ENCODE measurements at regions of chr2 and their contacts with region 1.

Region 1: GRCh38 chr2:223797811-223798721 is 39.3 kb downstream of the AP1S3 start:
- DNase-seq: peak; percentile 56
- H3K4me3 ChIP-seq: no peak overlapping the region
- H3K27ac ChIP-seq: peak overlapping the region; percentile 95
- H3K4me1 ChIP-seq: peaks cover 44% of the 10 kb centered on the region
- H3K27me3 ChIP-seq: no peaks in the 10 kb centered on the region
- CTCF ChIP-seq: peak; percentile 64

Region 2: DNA sequence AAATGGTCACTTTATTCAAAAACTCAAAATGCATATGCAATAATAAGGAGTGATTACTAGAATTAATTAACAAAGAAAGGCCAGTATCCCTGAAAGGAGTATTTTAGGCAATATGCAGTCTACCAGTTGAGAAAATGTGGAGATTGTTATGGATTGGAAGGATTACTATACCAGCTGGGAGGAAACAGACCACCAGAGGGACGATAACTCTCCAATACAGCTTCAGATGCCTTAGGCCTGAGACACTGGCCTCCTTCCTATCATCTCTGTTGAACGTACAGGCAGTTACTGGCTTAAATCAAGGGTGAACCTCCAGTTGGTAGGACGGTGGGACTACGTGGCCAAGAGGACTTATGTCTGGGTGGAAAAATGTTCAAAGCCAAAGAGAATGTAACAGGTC is 1889.5 kb before region 1 on chr2:
- CTCF ChIA-PET with region 1: no interaction called
- dilution Hi-C with region 1: no loop called
- in situ Hi-C with region 1: no loop called
- intact Hi-C with region 1: no loop called
- DNase-seq: no peak
- H3K4me3 ChIP-seq: no peak overlapping the region
- H3K27ac ChIP-seq: no peak overlapping the region
- H3K4me1 ChIP-seq: no peaks in the 10 kb centered on the region
- H3K27me3 ChIP-seq: peaks cover 3% of the 10 kb centered on the region
- CTCF ChIP-seq: no peak

Region 3: DNA sequence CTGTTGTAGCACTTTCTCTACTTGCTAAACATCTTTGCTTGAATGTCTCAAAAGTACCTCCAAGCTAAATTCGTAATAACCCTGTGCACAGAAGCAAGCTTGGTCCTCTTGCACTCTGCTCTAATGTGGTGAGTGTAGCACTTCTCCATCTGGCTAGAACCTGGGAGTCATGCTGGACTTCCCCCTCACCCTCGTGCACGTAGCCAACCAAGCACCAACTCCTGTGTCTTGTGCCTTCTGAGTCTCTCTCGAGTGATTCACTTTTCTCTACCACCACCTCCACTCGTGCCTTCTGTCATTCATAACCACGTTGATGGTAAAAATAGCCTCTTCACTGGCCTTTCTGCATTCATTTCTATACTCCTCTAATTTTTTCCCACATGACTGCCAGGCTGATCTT is 837.9 kb before region 1 on chr2:
- CTCF ChIA-PET with region 1: no interaction called
- dilution Hi-C with region 1: no loop called
- in situ Hi-C with region 1: no loop called
- intact Hi-C with region 1: no loop called
- DNase-seq: peak; percentile 67
- H3K4me3 ChIP-seq: no peak overlapping the region
- H3K27ac ChIP-seq: no peak overlapping the region
- H3K4me1 ChIP-seq: peaks cover 22% of the 10 kb centered on the region
- H3K27me3 ChIP-seq: no peaks in the 10 kb centered on the region
- CTCF ChIP-seq: no peak

Region 4: GRCh38 chr2:222976521-222977076 is 821.5 kb before region 1 on chr2:
- CTCF ChIA-PET with region 1: interaction called, 6 read pairs
- dilution Hi-C with region 1: no loop called
- in situ Hi-C with region 1: loop called in 1 of 2 experiments (anchors 10 kb)
- intact Hi-C with region 1: loop called (anchors 1 kb)
- DNase-seq: no peak
- H3K4me3 ChIP-seq: no peak overlapping the region
- H3K27ac ChIP-seq: no peak overlapping the region
- H3K4me1 ChIP-seq: peaks cover 15% of the 10 kb centered on the region
- H3K27me3 ChIP-seq: no peaks in the 10 kb centered on the region
- CTCF ChIP-seq: no peak

Region 5: DNA sequence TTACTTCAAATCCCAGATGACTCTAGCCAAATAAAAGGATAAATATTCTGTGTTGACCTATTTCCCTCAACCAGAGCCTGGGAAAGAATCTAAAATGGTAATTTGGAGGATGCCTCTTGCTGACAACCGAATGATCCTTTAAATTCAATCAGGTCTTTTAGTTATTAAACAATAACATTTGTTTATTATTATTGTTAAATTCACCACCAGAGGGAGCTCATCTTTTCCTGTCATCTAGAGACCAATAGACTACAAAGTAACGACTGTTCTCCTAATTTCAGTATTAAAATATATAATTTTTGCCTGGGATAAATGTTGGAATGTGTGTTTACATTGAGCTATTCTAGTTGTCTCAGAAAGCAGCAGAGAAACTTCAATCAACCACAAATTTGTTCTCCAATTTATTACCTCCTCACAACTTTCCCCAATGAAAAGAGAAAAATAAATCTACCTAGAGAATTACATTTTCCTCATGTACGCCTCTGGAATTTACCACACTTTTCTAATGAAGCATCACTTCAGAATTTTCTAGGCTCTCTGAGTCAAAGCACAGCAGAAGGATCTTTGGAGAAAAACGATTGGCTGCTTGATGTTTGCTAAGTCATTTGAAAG is 338.6 kb before region 1 on chr2:
- CTCF ChIA-PET with region 1: no interaction called
- dilution Hi-C with region 1: no loop called
- in situ Hi-C with region 1: no loop called
- intact Hi-C with region 1: loop called (anchors 1 kb)
- DNase-seq: peak; percentile 12
- H3K4me3 ChIP-seq: no peak overlapping the region
- H3K27ac ChIP-seq: peak overlapping the region; percentile 1
- H3K4me1 ChIP-seq: peaks cover 17% of the 10 kb centered on the region
- H3K27me3 ChIP-seq: no peaks in the 10 kb centered on the region
- CTCF ChIP-seq: peak; percentile 29 to 43

Region 6: DNA sequence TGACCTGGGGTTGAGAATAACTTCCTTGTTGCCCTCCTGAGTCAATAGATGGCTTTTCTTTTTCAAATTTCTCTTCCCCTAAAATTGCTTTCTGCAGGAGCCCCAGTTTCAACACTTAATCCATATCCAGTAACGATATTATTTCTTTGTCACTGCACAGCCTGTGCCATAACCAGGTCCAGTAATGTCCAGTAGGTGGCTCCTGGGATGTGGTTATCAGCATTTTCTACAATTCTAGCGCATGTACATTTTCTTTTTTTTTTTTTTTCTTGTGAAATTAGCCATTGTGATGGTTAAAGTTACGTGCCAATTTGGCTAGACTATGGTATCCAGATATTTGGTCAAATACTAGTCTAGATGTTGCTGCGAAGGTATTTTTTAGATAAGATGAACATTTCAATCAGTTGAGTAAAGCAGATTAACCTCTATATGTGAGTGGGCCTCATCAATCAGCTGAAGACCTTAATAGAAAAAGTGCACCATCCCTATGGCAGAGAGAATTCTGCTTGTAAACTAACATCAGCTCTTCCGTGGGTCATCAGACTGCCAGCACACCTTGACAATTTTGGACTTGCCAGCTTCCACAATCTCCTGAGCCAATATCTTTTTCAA is 123.0 kb before region 1 on chr2:
- CTCF ChIA-PET with region 1: interaction called, 15 read pairs
- dilution Hi-C with region 1: no loop called
- in situ Hi-C with region 1: no loop called
- intact Hi-C with region 1: loop called (anchors 1 kb)
- DNase-seq: peak; percentile 46
- H3K4me3 ChIP-seq: no peak overlapping the region
- H3K27ac ChIP-seq: no peak overlapping the region
- H3K4me1 ChIP-seq: no peaks in the 10 kb centered on the region
- H3K27me3 ChIP-seq: no peaks in the 10 kb centered on the region
- CTCF ChIP-seq: peak; percentile 81 to 87

Region 7: DNA sequence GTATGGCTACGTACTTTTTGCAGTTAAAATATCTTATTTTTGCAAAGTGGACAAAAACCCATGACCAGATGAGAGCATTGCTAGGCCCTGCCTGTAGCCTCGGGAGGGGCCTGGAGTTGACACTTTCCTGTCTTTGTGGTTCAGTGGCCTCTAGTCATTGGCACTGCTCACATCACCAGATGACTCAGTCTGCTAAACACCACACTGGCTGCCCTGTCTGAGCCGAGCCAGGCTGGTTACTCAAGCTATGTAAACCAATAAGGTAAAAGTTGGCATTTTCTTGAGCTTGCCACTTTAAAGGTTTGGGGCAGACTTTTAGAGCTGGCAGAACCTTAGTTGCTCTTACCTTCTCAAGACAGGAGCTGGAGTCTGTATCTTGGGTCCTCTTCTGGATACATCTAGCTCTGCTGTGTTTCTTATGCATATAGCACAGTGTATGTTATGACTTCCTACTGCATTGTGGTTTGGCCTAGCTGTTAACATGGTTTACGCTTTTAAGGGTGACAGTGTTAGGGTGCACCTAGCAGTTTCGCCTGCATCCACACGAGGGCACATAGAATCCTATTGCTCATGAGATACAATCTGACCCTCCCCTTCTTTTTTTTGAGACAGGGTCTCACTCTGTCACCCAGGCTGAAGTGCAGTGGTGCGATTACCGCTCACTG is 37.1 kb before region 1 on chr2:
- CTCF ChIA-PET with region 1: no interaction called
- dilution Hi-C with region 1: loop called (anchors 5 kb)
- in situ Hi-C with region 1: no loop called
- intact Hi-C with region 1: loop called (anchors 1 kb)
- DNase-seq: peak; percentile 98
- H3K4me3 ChIP-seq: peak overlapping the region in 1 of 3 experiments; percentile 2
- H3K27ac ChIP-seq: peak overlapping the region; percentile 95
- H3K4me1 ChIP-seq: peaks cover 36% of the 10 kb centered on the region
- H3K27me3 ChIP-seq: no peaks in the 10 kb centered on the region
- CTCF ChIP-seq: peak; percentile 39 to 43

Measured in mammary epithelial cell (primary cell).